H1 (cell line): ENCODE measurements at regions of chr10 and their contacts with region 1.

Region 1: GRCh38 chr10:122142641-122143237 is 128.4 kb upstream of the BTBD16 start:
- DNase-seq: peak in 1 of 2 experiments; percentile 99
- H3K4me3 ChIP-seq: no peak overlapping the region
- H3K27ac ChIP-seq: no peak overlapping the region
- H3K4me1 ChIP-seq: peaks cover 0 to 7% (median 3%) of the 10 kb centered on the region in 4 experiments; a peak in 5 of 7 replicates
- H3K27me3 ChIP-seq: no peaks in the 10 kb centered on the region
- CTCF ChIP-seq: peak; percentile 85 to 97 (median 91)
- EP300 ChIP-seq: peak in 1 of 2 experiments; percentile 19; a peak in 1 of 3 replicates
- POLR2A ChIP-seq: no peak
- RAD21 ChIP-seq: peak; percentile 93 to 95

Region 2: GRCh38 chr10:121927841-121928527 is 214.8 kb before region 1 on chr10 and contains the start of gene ATE1:
- CTCF ChIA-PET with region 1: no interaction called
- POLR2A ChIA-PET with region 1: no interaction called
- DNase-seq: peak; percentile 69 to 91
- H3K4me3 ChIP-seq: peak within 1 kb of the TSS; percentile 85 to 96 (median 90)
- H3K27ac ChIP-seq: peak within 1 kb of the TSS; percentile 100
- H3K4me1 ChIP-seq: peaks cover 0 to 7% (median 1%) of the 10 kb centered on the region in 4 experiments; a peak in 3 of 7 replicates
- H3K27me3 ChIP-seq: no peaks in the 10 kb centered on the region
- CTCF ChIP-seq: no peak
- EP300 ChIP-seq: peak in 1 of 2 experiments; percentile 10; a peak in 1 of 3 replicates
- POLR2A ChIP-seq: peak; percentile 90 to 98
- RAD21 ChIP-seq: peak; percentile 1 to 21; a peak in 3 of 4 replicates
- total RNA-seq, gene ATE1: 26.9 and 28.6 TPM in 2 replicates

Region 3: DNA sequence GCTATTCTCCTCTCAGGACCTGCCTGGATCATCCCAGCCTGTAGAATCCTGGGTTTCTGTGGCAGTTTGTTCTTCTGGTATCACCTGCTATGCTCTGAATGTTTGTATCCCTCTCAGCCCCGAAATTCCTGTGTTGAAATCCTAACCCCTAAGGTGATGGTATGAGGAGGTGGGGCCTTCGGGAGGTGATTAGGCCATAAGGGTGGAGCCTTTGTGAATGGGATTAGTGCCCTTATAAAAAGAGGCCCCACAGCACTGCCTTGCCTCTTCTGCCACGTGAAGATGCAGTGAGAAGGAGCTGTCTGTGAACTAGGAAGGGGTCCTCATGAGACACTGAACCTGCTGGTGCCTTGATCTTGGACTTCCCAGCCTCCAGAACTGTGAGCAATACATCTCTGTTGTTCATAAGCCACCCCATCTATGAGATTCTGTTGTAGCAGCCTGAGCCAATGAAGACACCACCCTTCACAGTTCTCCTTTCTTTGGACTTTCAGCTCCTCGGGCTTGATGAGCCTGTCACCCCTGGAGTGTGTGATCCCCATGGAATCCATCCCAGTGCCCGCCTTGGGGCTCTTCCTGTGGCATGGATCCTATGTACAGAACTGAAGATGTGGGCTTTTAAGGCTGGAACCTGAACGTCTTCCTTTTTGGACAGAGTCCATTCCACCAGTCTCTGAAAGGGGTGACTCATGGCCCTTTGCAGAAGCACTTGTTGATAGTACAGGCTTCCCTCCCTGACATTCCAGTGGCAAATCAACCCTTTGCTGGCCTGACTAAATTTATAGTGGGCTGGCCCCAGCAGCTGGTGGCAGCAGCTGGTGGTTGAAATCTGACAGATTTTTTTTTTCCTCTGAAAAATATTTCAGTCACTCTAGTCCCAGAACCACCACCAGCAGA is 15.7 kb before region 1 on chr10:
- CTCF ChIA-PET with region 1: interaction called, 17 read pairs
- POLR2A ChIA-PET with region 1: interaction called, 4 read pairs
- DNase-seq: no peak
- H3K4me3 ChIP-seq: no peak overlapping the region
- H3K27ac ChIP-seq: peak overlapping the region; percentile 38; the same call in 1 of the 2 replicates
- H3K4me1 ChIP-seq: peaks cover 5 to 13% (median 7%) of the 10 kb centered on the region in 4 experiments
- H3K27me3 ChIP-seq: no peaks in the 10 kb centered on the region
- CTCF ChIP-seq: no peak
- EP300 ChIP-seq: no peak
- POLR2A ChIP-seq: peak in 1 of 2 experiments; percentile 52; a peak in 1 of 3 replicates
- RAD21 ChIP-seq: no peak

Region 4: GRCh38 chr10:122154545-122155366 is 12.0 kb after region 1 on chr10:
- CTCF ChIA-PET with region 1: interaction called, 65 read pairs
- POLR2A ChIA-PET with region 1: interaction called, 5 read pairs
- DNase-seq: no peak
- H3K4me3 ChIP-seq: no peak overlapping the region
- H3K27ac ChIP-seq: no peak overlapping the region
- H3K4me1 ChIP-seq: peaks cover 0 to 18% (median 12%) of the 10 kb centered on the region in 4 experiments; a peak in 6 of 7 replicates
- H3K27me3 ChIP-seq: no peaks in the 10 kb centered on the region
- CTCF ChIP-seq: peak in 2 of 3 experiments; percentile 21 to 23; a peak in 2 of 4 replicates
- EP300 ChIP-seq: no peak
- POLR2A ChIP-seq: no peak
- RAD21 ChIP-seq: peak; percentile 38 to 49

Region 5: DNA sequence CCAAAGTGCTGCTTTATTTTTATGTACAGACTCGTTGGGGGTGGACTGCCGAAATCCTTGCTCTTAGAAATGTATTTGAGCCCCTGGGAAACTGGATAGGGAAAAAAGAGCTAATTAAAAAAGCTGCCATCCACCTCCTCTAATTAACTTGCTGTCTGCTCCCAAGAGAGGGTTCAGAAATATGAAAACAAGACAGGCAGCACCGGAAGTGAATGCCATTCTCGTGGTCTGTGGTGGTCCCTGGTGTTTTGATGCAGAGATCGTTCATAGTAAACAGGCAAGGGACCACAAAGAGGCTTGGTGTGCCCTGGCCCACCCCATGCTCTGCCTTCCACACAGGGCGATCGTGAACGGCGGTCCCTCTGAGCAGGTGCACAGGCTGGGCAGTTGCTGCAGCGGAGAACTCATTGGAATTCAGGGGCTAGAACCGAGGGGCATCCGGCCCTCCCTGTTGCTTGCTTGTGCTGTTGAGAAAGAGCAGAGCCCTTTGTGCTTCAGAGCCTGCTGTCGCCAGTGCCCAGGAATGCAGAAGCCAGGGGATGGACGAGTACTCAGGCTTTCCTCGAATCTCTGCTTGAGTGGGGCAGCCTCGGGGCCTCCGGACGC is 49.3 kb after region 1 on chr10:
- CTCF ChIA-PET with region 1: interaction called, 22 read pairs
- POLR2A ChIA-PET with region 1: no interaction called
- DNase-seq: no peak
- H3K4me3 ChIP-seq: no peak overlapping the region
- H3K27ac ChIP-seq: 0 out of 2 replicates have a peak overlapping the region, but pooled peaks have one; percentile 16
- H3K4me1 ChIP-seq: peaks cover 9 to 15% (median 12%) of the 10 kb centered on the region in 4 experiments
- H3K27me3 ChIP-seq: no peaks in the 10 kb centered on the region
- CTCF ChIP-seq: no peak
- EP300 ChIP-seq: no peak
- POLR2A ChIP-seq: no peak
- RAD21 ChIP-seq: no peak

Region 6: DNA sequence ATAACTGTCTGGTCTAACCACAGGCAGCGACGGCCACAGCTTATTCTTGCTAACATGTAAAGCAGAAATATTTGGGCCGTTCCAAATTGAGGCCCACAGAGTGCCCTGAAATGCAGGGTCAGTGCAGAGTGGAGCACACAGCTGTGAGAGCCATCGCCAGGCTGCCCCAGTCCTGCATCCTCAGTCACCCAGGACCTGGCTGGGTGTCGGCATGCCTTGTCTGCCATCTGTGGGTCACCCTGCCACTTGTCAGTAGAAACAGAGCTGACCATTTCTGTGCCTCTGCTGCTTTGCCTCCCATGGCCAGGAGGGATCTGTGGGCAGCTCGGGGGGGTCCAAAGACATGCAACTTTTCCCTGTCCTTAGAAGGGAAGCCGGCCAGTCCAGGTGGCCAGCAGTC is 71.0 kb after region 1 on chr10:
- CTCF ChIA-PET with region 1: interaction called, 12 read pairs
- POLR2A ChIA-PET with region 1: no interaction called
- DNase-seq: no peak
- H3K4me3 ChIP-seq: no peak overlapping the region
- H3K27ac ChIP-seq: no peak overlapping the region
- H3K4me1 ChIP-seq: no peaks in the 10 kb centered on the region; a peak in 1 of 7 replicates
- H3K27me3 ChIP-seq: no peaks in the 10 kb centered on the region
- CTCF ChIP-seq: peak; percentile 21 to 39 (median 26)
- EP300 ChIP-seq: no peak
- POLR2A ChIP-seq: no peak
- RAD21 ChIP-seq: peak; percentile 42 to 62